CD8-positive, alpha-beta T cell (primary cell): ENCODE measurements at regions of chr1 and their contacts with region 1.

Region 1: DNA sequence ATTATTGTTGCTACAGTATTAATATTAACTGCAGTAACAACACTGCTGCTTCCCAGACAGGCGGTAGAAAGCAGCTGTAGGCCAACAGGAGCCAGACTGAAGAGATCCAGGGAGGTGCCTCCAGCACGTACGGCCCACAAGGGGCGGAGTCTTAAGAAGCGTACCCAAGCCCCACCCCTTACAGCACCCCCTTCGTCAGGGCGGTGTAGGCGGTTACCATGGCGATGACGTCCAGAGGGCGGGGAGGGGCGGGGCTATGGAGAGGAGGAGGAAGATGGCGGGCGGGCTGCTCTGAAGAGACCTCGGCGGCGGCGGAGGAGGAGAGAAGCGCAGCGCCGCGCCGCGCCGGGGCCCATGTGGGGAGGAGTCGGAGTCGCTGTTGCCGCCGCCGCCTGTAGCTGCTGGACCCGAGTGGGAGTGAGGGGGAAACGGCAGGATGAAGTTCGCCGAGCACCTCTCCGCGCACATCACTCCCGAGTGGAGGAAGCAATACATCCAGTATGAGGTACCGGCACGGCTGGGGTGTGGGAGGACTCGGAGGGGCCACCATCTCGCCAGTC is at the start of gene XPR1:
- DNase-seq: peak; percentile 97 to 99 (median 99)
- ATAC-seq: peak; percentile 96
- H3K4me3 ChIP-seq: peak within 1 kb of the TSS; percentile 93 to 94
- H3K4me3 Mint-ChIP-seq: no peak within 1 kb of the TSS
- H3K27ac ChIP-seq: peak within 1 kb of the TSS; percentile 89 to 94
- H3K27ac Mint-ChIP-seq: peak within 1 kb of the TSS; percentile 43
- H3K4me1 ChIP-seq: peaks cover 23% of the 10 kb centered on the region
- H3K4me1 Mint-ChIP-seq: peaks cover 20% of the 10 kb centered on the region
- H3K27me3 ChIP-seq: no peaks in the 10 kb centered on the region
- H3K27me3 Mint-ChIP-seq: peaks cover 3% of the 10 kb centered on the region
- CTCF ChIP-seq: no peak
- total RNA-seq, gene XPR1: 11.6 to 12.3 TPM

Region 2: DNA sequence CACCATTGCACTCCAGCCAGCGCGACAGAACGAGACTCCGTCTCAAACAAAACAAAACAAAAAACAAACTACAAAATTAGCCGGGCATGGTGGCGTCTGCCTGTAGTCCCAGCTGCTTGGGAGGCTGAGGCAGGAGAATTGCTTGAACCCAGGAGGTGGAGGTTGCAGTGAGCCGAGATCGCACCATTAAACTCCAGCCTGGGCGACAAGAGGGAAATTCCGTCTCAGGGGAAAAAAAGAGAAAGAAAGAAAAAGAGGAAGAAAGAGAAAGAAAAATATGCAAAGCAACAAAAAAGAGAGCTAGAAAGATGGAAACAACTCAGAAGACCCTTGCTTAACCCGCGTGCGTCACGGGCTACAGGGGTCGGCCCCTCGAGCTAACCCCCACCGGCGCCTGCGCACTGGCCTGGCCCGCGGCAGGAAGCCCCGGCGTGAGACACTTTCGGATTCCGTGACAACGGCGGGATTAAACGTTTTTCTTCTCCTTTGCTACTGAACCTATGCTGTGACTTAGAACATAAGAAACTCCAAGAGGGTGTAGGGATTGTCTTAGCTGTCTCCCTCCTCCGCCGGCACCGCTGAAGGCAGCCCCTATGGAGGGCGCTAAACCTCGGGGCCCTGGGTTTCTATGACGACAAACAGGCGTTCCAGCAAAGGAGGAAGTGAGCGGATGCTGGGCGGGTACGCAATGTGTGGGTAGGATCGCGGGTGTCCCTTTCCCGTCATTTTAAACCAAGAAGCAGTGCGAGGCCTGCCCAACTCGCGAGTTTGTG is 1266.3 kb before region 1 on chr1 and contains the start of gene AXDND1:
- CTCF ChIA-PET with region 1: no interaction called
- POLR2A ChIA-PET with region 1: no interaction called
- intact Hi-C with region 1: loop called in 1 of 2 experiments (anchors 10 kb)
- DNase-seq: peak; percentile 80 to 96 (median 90)
- ATAC-seq: peak; percentile 92
- H3K4me3 ChIP-seq: peak within 1 kb of the TSS; percentile 72 to 73
- H3K4me3 Mint-ChIP-seq: peak within 1 kb of the TSS; percentile 99
- H3K27ac ChIP-seq: peak within 1 kb of the TSS; percentile 92 to 99
- H3K27ac Mint-ChIP-seq: peak within 1 kb of the TSS; percentile 100
- H3K4me1 ChIP-seq: peaks cover 6% of the 10 kb centered on the region
- H3K4me1 Mint-ChIP-seq: peaks cover 12% of the 10 kb centered on the region
- H3K27me3 ChIP-seq: no peaks in the 10 kb centered on the region
- H3K27me3 Mint-ChIP-seq: no peaks in the 10 kb centered on the region
- CTCF ChIP-seq: no peak
- total RNA-seq, gene AXDND1: 0.98 to 1.6 TPM

Region 3: DNA sequence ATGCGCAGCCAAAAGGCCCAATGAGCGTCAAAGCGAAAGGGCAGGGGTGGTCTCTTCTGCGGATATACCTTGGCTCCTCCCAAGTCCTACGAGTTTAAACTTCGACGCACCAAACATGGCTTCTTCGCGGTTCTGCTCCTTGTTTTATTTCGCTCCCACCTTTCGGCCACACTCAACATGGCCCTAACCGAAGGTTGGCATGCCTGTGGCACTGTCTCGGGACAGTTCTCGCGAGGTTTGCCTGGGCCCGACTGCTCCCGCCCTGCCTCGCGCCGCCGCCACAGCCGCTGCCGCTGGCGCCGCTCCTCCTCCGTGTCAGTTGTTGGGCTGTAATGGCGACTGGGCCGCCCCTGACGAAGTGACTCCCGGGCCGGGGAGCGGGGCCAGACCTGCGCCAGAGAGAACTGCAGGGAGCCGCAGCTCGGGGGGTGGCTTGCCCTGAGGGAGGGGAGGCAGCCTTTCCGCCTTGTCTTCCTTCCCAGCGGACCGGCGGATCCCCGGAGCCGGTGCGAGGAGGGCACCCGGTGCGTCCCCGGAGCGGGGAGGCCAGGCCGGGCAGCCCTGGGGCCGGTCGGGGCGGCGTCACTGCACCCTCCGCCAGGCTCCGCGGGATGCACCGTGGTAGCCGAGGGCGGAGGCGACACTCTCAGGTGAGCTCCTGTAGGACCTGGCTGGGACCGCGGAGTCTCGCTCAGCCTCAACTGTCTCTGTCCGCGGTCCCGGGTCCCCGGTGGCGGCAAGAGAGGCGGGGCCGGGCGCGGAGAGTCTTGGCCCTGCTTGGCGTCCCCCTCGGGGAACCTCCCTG is 677.2 kb before region 1 on chr1 and contains the start of gene CEP350:
- CTCF ChIA-PET with region 1: no interaction called
- POLR2A ChIA-PET with region 1: no interaction called
- intact Hi-C with region 1: loop called in 1 of 2 experiments (anchors 10 kb)
- DNase-seq: peak; percentile 94 to 100 (median 97)
- ATAC-seq: peak; percentile 86
- H3K4me3 ChIP-seq: peak within 1 kb of the TSS; percentile 69 to 85
- H3K4me3 Mint-ChIP-seq: peak within 1 kb of the TSS; percentile 85
- H3K27ac ChIP-seq: peak within 1 kb of the TSS; percentile 77 to 88
- H3K27ac Mint-ChIP-seq: peak within 1 kb of the TSS; percentile 95
- H3K4me1 ChIP-seq: peaks cover 35% of the 10 kb centered on the region
- H3K4me1 Mint-ChIP-seq: peaks cover 59% of the 10 kb centered on the region
- H3K27me3 ChIP-seq: no peaks in the 10 kb centered on the region
- H3K27me3 Mint-ChIP-seq: no peaks in the 10 kb centered on the region
- CTCF ChIP-seq: no peak
- total RNA-seq, gene CEP350: 37.6 to 42.7 TPM

Region 4: GRCh38 chr1:180415985-180416633 is 215.7 kb before region 1 on chr1:
- CTCF ChIA-PET with region 1: no interaction called
- POLR2A ChIA-PET with region 1: no interaction called
- intact Hi-C with region 1: no loop called
- DNase-seq: peak in 2 of 9 experiments; percentile 10 to 23
- ATAC-seq: no peak
- H3K4me3 ChIP-seq: no peak overlapping the region
- H3K4me3 Mint-ChIP-seq: no peak overlapping the region
- H3K27ac ChIP-seq: no peak overlapping the region
- H3K27ac Mint-ChIP-seq: no peak overlapping the region
- H3K4me1 ChIP-seq: no peaks in the 10 kb centered on the region
- H3K4me1 Mint-ChIP-seq: no peaks in the 10 kb centered on the region
- H3K27me3 ChIP-seq: no peaks in the 10 kb centered on the region
- H3K27me3 Mint-ChIP-seq: no peaks in the 10 kb centered on the region
- CTCF ChIP-seq: peak; percentile 52

Region 5: DNA sequence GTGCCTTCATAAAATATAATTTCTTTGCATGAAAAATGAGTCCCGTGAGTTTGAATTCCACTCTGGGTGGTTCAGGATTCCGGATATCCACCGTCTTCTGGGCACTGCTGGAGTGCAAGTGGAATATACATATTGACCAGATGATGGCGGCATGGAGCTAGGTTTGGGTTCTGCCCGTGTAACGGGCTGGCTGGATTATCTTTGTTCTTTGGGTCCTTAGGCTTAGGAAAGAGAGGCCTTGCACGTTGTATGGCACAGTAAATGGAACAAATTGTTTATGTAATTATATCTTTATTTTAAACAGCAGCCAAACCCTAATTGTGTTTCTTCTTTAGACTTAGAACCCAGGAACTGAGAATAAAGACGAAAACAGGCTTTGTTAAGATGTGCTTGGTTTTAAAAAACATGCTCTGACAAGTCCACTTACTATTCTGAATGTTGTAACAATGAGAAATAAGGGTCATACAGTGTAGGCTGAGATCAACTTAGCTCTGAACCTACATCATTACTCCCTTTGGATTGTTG is 115.9 kb before region 1 on chr1:
- CTCF ChIA-PET with region 1: no interaction called
- POLR2A ChIA-PET with region 1: interaction called, 3 read pairs
- intact Hi-C with region 1: loop called in 1 of 2 experiments (anchors 5 kb)
- DNase-seq: peak; percentile 10 to 76 (median 51)
- ATAC-seq: peak; percentile 95
- H3K4me3 ChIP-seq: no peak overlapping the region
- H3K4me3 Mint-ChIP-seq: no peak overlapping the region
- H3K27ac ChIP-seq: no peak overlapping the region
- H3K27ac Mint-ChIP-seq: no peak overlapping the region
- H3K4me1 ChIP-seq: no peaks in the 10 kb centered on the region
- H3K4me1 Mint-ChIP-seq: peaks cover 2% of the 10 kb centered on the region
- H3K27me3 ChIP-seq: no peaks in the 10 kb centered on the region
- H3K27me3 Mint-ChIP-seq: peaks cover 15% of the 10 kb centered on the region
- CTCF ChIP-seq: peak; percentile 93

Region 6: DNA sequence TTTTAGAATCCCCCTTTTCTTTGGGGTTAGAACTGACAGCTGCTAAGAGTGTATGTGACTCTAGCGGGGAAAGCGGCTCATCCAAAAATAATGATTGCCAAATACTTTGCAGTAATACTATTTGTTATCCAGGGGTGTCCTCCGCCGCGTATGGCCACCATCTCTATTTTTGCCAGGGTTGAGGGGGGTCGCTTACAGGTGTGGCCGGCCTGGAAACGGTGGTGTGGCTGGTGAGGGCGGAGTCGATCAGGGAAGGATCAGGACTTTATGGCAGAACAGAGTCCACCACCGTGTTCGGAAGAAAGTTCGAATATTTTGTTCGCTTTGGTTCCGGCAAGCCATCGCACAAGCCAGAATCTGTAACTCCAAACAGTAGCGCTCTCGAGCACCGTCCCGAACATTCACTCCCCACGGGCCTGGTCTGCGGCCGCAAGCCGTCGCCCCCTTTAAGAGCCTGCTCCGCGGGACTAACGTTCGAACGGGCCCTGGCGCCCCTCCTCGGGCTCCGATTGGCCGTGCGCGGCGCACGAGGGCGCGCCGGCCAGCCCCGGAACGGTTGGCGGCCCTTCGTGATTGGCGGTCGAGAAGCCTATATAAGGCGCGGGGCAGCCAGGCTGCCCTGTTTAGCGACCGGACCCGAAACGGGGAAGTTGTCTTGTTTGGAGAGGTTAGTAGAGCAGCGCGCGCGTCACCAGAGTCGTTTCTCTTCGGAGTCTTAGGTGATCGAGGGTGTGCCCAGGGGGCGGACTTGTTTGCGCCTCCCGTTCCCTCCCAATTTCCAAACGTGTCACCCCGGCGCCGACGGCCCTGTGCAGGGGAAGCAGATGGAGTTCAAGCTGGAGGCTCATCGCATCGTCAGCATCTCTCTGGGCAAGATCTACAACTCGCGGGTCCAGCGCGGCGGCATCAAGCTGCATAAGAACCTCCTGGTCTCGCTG is 456.5 kb after region 1 on chr1 and contains the start of gene IER5:
- CTCF ChIA-PET with region 1: no interaction called
- POLR2A ChIA-PET with region 1: no interaction called
- intact Hi-C with region 1: loop called (anchors 2 to 5 kb)
- DNase-seq: peak; percentile 93 to 97 (median 95)
- ATAC-seq: peak; percentile 71
- H3K4me3 ChIP-seq: peak within 1 kb of the TSS; percentile 70 to 97
- H3K4me3 Mint-ChIP-seq: peak within 1 kb of the TSS; percentile 99
- H3K27ac ChIP-seq: peak within 1 kb of the TSS; percentile 89 to 99
- H3K27ac Mint-ChIP-seq: peak within 1 kb of the TSS; percentile 99
- H3K4me1 ChIP-seq: peaks cover 20% of the 10 kb centered on the region
- H3K4me1 Mint-ChIP-seq: peaks cover 44% of the 10 kb centered on the region
- H3K27me3 ChIP-seq: no peaks in the 10 kb centered on the region
- H3K27me3 Mint-ChIP-seq: no peaks in the 10 kb centered on the region
- CTCF ChIP-seq: no peak
- total RNA-seq, gene IER5: 74.7 to 76.6 TPM

Region 7: GRCh38 chr1:181179987-181180365 is 548.1 kb after region 1 on chr1:
- CTCF ChIA-PET with region 1: no interaction called
- POLR2A ChIA-PET with region 1: no interaction called
- intact Hi-C with region 1: no loop called
- DNase-seq: peak in 6 of 9 experiments; percentile 20 to 78 (median 50)
- ATAC-seq: peak; percentile 78
- H3K4me3 ChIP-seq: no peak overlapping the region
- H3K4me3 Mint-ChIP-seq: peak overlapping the region; percentile 16
- H3K27ac ChIP-seq: no peak overlapping the region
- H3K27ac Mint-ChIP-seq: peak overlapping the region; percentile 52
- H3K4me1 ChIP-seq: peaks cover 16% of the 10 kb centered on the region
- H3K4me1 Mint-ChIP-seq: peaks cover 18% of the 10 kb centered on the region
- H3K27me3 ChIP-seq: no peaks in the 10 kb centered on the region
- H3K27me3 Mint-ChIP-seq: peaks cover 3% of the 10 kb centered on the region
- CTCF ChIP-seq: no peak

Region 8: DNA sequence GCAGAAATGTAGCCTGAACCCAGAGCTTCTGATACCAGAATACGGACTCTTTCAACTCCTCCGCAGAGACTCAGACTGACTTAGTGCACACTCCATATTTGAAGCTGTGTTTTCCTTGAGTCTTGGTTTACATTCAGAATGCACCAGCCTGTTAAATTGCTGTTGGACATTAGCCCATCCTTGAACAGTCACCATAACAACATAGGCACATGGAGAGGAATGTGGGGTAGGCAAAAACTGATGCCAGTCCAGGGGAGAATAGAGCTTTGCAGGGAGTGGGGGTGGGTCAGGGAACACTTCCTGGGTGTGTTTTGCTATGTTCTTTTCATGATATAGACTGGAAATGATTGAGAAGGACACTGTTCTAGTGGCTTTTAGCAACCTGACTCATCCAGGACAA is 775.1 kb after region 1 on chr1:
- CTCF ChIA-PET with region 1: no interaction called
- POLR2A ChIA-PET with region 1: no interaction called
- intact Hi-C with region 1: loop called in 1 of 2 experiments (anchors 10 kb)
- DNase-seq: no peak
- ATAC-seq: no peak
- H3K4me3 ChIP-seq: no peak overlapping the region
- H3K4me3 Mint-ChIP-seq: no peak overlapping the region
- H3K27ac ChIP-seq: no peak overlapping the region
- H3K27ac Mint-ChIP-seq: no peak overlapping the region
- H3K4me1 ChIP-seq: peaks cover 6% of the 10 kb centered on the region
- H3K4me1 Mint-ChIP-seq: peaks cover 19% of the 10 kb centered on the region
- H3K27me3 ChIP-seq: no peaks in the 10 kb centered on the region
- H3K27me3 Mint-ChIP-seq: no peaks in the 10 kb centered on the region
- CTCF ChIP-seq: no peak